Psoas muscle (tissue), 8 donors: ENCODE measurements at regions of chr13 and their contacts with region 1.

Region 1: GRCh38 chr13:50529154-50529882 is 314.2 kb downstream of the DLEU7 start:
- DNase-seq: peak; percentile 86 to 90
- ATAC-seq: peak; percentile 84 to 91 (median 90)
- H3K4me3 ChIP-seq: peak overlapping the region; percentile 54
- H3K27ac ChIP-seq: peak overlapping the region; percentile 94
- H3K4me1 ChIP-seq: peaks cover 48% of the 10 kb centered on the region
- H3K27me3 ChIP-seq: no peaks in the 10 kb centered on the region
- CTCF ChIP-seq: no peak

Region 2: GRCh38 chr13:49976314-49977258 is 552.7 kb before region 1 on chr13:
- intact Hi-C with region 1: loop called (anchors 2 to 5 kb)
- DNase-seq: peak; percentile 64 to 80
- ATAC-seq: peak; percentile 73 to 92 (median 86)
- H3K4me3 ChIP-seq: no peak overlapping the region
- H3K27ac ChIP-seq: no peak overlapping the region
- H3K4me1 ChIP-seq: no peaks in the 10 kb centered on the region
- H3K27me3 ChIP-seq: no peaks in the 10 kb centered on the region
- CTCF ChIP-seq: peak; percentile 90

Region 3: DNA sequence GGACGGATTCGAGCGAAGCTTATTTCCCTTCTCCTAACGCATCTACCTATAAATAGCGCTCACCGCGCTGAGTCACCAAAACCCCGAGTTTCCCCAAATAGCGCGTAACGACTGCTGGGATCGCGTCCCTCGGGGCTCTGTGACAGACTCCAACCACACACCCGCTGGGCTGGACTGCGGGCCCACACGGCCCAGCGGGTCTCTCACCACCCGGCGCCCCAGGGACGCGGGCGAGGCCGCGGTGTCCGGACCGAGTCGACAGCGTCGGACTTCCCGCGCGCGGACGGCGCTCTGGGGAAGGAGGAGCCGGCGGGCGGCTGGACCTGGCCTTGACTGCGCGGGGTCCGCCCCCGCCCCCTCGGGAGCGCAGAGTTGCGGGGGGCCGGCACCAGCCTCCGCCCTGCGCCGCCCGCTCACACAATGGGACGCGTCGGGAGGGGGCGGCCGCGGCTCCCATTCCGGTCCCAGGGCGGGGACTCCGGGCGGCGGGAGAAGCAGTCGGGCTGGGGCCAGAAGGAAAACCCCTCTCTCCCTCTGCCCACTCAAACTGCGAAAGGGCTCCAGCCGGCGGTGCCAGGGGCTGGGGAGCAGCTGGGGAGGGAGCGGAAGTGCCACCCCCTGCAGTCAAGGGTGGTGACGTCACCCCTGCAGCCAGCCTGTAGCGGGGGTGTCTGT is 405.3 kb before region 1 on chr13:
- intact Hi-C with region 1: loop called in 1 of 2 experiments (anchors 2 kb)
- DNase-seq: peak; percentile 87 to 94
- ATAC-seq: peak; percentile 83 to 91 (median 86)
- H3K4me3 ChIP-seq: peak overlapping the region; percentile 99
- H3K27ac ChIP-seq: peak overlapping the region; percentile 100
- H3K4me1 ChIP-seq: peaks cover 40% of the 10 kb centered on the region
- H3K27me3 ChIP-seq: no peaks in the 10 kb centered on the region
- CTCF ChIP-seq: no peak

Region 4: GRCh38 chr13:50387051-50387581 is 142.2 kb before region 1 on chr13:
- intact Hi-C with region 1: loop called (anchors 1 to 5 kb)
- DNase-seq: peak; percentile 61 to 82
- ATAC-seq: peak; percentile 92 to 96 (median 95)
- H3K4me3 ChIP-seq: peak overlapping the region; percentile 78
- H3K27ac ChIP-seq: peak overlapping the region; percentile 96
- H3K4me1 ChIP-seq: peaks cover 10% of the 10 kb centered on the region
- H3K27me3 ChIP-seq: no peaks in the 10 kb centered on the region
- CTCF ChIP-seq: no peak

Region 5: GRCh38 chr13:50421473-50422130 is 107.7 kb before region 1 on chr13:
- intact Hi-C with region 1: loop called in 1 of 2 experiments (anchors 2 kb)
- DNase-seq: no peak
- ATAC-seq: peak in 2 of 4 donors; percentile 35 to 39
- H3K4me3 ChIP-seq: no peak overlapping the region
- H3K27ac ChIP-seq: peak overlapping the region; percentile 87
- H3K4me1 ChIP-seq: peaks cover 67% of the 10 kb centered on the region
- H3K27me3 ChIP-seq: no peaks in the 10 kb centered on the region
- CTCF ChIP-seq: no peak

Region 6: GRCh38 chr13:50801087-50801931 is 272.0 kb after region 1 on chr13:
- intact Hi-C with region 1: loop called in 1 of 2 experiments (anchors 5 kb)
- DNase-seq: no peak
- ATAC-seq: peak; percentile 83 to 96 (median 90)
- H3K4me3 ChIP-seq: peak overlapping the region; percentile 30
- H3K27ac ChIP-seq: no peak overlapping the region
- H3K4me1 ChIP-seq: peaks cover 14% of the 10 kb centered on the region
- H3K27me3 ChIP-seq: no peaks in the 10 kb centered on the region
- CTCF ChIP-seq: peak; percentile 73

Region 7: GRCh38 chr13:50909605-50910484 is 380.5 kb after region 1 on chr13 and contains the start of gene RNASEH2B:
- intact Hi-C with region 1: no loop called
- DNase-seq: peak; percentile 73 to 80
- ATAC-seq: peak; percentile 87 to 90 (median 88)
- H3K4me3 ChIP-seq: peak within 1 kb of the TSS; percentile 76
- H3K27ac ChIP-seq: peak within 1 kb of the TSS; percentile 81
- H3K4me1 ChIP-seq: no peaks in the 10 kb centered on the region
- H3K27me3 ChIP-seq: no peaks in the 10 kb centered on the region
- CTCF ChIP-seq: peak; percentile 4
- total RNA-seq, gene RNASEH2B: 10.6 to 20.7 (median 17.1) TPM